ENCODE measurements at regions of chr17 and their contacts with region 1.

Region 1: GRCh38 chr17:17890773-17891759 is 54.3 kb upstream of the SREBF1 start:
- DNase-seq: peak; percentile 52
- ATAC-seq: peak; percentile 94
- H3K4me3 ChIP-seq: no peak overlapping the region
- H3K27ac ChIP-seq: no peak overlapping the region
- H3K4me1 ChIP-seq: no peaks in the 10 kb centered on the region
- H3K27me3 ChIP-seq: no peaks in the 10 kb centered on the region
- CTCF ChIP-seq: peak; percentile 90

Region 2: DNA sequence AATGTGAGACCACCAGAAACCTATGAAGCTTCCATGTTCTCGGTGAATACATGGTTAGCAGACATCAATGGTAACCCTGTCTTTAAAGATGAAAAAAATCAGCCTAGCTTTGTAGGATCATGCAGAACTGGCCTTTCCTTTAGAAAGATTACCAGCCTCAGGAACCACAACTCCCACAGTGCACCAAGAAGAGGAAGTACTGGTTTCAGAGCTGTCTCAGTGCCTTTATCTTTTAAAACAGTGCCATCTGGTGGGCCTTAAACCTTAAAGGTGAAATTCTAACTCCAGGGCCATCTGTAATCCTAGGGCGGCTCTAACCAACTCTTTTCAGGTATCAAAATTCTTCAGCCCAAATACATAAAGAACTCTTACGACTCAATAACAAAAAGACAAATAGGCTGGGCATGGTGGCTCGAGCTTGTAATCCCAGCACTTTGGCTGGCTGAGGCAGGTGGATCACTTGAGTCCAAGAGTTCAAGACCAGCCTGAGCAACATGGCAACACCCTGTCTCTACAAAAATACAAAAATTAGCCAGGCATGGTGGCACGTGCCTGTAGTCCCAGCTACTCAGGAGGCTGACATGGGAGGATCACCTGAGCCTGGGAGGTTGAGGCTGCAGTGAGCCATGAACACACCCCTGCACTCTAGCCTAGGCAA is 142.5 kb after region 1 on chr17:
- CTCF ChIA-PET with region 1: no interaction called
- POLR2A ChIA-PET with region 1: no interaction called
- in situ Hi-C with region 1: no loop called
- intact Hi-C with region 1: loop called (anchors 2 kb)
- DNase-seq: peak; percentile 68
- ATAC-seq: peak; percentile 96
- H3K4me3 ChIP-seq: no peak overlapping the region
- H3K27ac ChIP-seq: no peak overlapping the region
- H3K4me1 ChIP-seq: peaks cover 7% of the 10 kb centered on the region
- H3K27me3 ChIP-seq: no peaks in the 10 kb centered on the region
- CTCF ChIP-seq: peak; percentile 29

Measured in Panc1 (cell line).